GM23248 (cell line): ENCODE measurements at regions of chr15 and their contacts with region 1.

Region 1: DNA sequence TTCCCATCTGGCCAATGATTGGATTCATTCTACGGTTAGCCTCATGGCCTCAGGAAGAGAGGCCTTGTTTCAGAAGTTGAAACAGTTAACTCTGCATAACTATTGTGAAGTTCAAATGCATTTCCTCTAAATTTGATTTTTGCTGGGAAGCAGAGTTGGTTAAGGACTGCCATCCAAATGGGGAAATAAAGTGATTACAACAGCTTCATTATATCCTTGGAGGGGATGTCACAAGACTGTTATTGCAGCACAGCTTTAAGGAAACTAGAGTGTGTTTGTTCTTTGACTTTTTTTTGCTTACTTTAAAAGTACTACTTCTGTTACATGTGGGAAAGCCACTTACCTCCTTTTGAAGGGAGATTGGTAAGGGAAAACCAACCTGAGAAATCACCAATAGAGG is 164.8 kb downstream of the AKAP13 start:
- DNase-seq: peak; percentile 18
- H3K4me3 ChIP-seq: no peak overlapping the region
- H3K27ac ChIP-seq: no peak overlapping the region
- H3K4me1 ChIP-seq: no peaks in the 10 kb centered on the region
- H3K27me3 ChIP-seq: no peaks in the 10 kb centered on the region

Region 2: GRCh38 chr15:85597155-85597815 is 52.1 kb after region 1 on chr15:
- in situ Hi-C with region 1: loop called (anchors 5 kb)
- DNase-seq: no peak
- H3K4me3 ChIP-seq: no peak overlapping the region
- H3K27ac ChIP-seq: no peak overlapping the region
- H3K4me1 ChIP-seq: peaks cover 4% of the 10 kb centered on the region
- H3K27me3 ChIP-seq: no peaks in the 10 kb centered on the region